ENCODE measurements at regions of chr9 and their contacts with region 1.

Region 1: DNA sequence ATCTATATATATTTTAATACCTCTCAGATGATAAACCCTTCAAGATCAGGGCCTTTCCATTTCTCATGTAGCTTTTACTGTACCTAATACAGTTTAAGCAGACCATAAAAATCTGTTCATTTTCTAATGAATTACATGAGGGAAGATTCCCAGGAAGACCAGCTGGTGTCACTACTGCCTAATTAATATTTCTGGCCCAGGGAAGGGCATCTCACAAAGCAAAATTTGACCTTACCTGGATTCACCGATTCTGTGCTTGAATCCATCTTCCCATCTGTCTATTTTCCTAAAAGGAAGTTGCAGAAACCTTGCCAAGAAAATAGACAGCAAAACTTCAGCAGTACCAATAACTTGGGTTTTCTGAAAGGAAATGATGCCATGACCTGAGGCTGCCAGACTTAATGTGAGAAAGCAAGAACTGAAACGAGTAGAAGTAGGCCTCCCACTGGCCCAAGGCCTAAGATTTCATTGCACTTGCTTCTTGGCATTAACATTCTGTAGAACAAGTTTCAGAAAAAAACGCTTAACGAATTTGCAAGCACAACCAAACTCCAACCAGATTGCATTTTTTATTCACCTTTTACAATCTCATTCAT is 83.0 kb upstream of the GLIS3 start:
- DNase-seq: peak; percentile 50
- ATAC-seq: peak; percentile 45
- H3K4me3 ChIP-seq: no peak overlapping the region
- H3K27ac ChIP-seq: no peak overlapping the region
- H3K4me1 ChIP-seq: no peaks in the 10 kb centered on the region
- H3K27me3 ChIP-seq: no peaks in the 10 kb centered on the region
- CTCF ChIP-seq: peak; percentile 74

Region 2: GRCh38 chr9:4397917-4398316 is 15.1 kb after region 1 on chr9:
- CTCF ChIA-PET with region 1: no interaction called
- POLR2A ChIA-PET with region 1: no interaction called
- intact Hi-C with region 1: no loop called
- DNase-seq: no peak
- ATAC-seq: no peak
- H3K4me3 ChIP-seq: no peak overlapping the region
- H3K27ac ChIP-seq: no peak overlapping the region
- H3K4me1 ChIP-seq: no peaks in the 10 kb centered on the region
- H3K27me3 ChIP-seq: no peaks in the 10 kb centered on the region
- CTCF ChIP-seq: no peak

Region 3: GRCh38 chr9:4489919-4490704 is 107.3 kb after region 1 on chr9 and contains the start of gene SLC1A1:
- CTCF ChIA-PET with region 1: interaction called, 3 read pairs
- POLR2A ChIA-PET with region 1: no interaction called
- intact Hi-C with region 1: loop called (anchors 10 kb)
- DNase-seq: peak; percentile 63
- ATAC-seq: peak; percentile 81
- H3K4me3 ChIP-seq: peak within 1 kb of the TSS; percentile 85
- H3K27ac ChIP-seq: 0 out of 2 replicates have a peak within 1 kb of the TSS, but pooled peaks have one; percentile 8
- H3K4me1 ChIP-seq: peaks cover 10% of the 10 kb centered on the region; the same call in 1 of the 2 replicates
- H3K27me3 ChIP-seq: no peaks in the 10 kb centered on the region
- CTCF ChIP-seq: no peak
- total RNA-seq, gene SLC1A1: 3.2 and 4.8 TPM in 2 replicates

Region 4: DNA sequence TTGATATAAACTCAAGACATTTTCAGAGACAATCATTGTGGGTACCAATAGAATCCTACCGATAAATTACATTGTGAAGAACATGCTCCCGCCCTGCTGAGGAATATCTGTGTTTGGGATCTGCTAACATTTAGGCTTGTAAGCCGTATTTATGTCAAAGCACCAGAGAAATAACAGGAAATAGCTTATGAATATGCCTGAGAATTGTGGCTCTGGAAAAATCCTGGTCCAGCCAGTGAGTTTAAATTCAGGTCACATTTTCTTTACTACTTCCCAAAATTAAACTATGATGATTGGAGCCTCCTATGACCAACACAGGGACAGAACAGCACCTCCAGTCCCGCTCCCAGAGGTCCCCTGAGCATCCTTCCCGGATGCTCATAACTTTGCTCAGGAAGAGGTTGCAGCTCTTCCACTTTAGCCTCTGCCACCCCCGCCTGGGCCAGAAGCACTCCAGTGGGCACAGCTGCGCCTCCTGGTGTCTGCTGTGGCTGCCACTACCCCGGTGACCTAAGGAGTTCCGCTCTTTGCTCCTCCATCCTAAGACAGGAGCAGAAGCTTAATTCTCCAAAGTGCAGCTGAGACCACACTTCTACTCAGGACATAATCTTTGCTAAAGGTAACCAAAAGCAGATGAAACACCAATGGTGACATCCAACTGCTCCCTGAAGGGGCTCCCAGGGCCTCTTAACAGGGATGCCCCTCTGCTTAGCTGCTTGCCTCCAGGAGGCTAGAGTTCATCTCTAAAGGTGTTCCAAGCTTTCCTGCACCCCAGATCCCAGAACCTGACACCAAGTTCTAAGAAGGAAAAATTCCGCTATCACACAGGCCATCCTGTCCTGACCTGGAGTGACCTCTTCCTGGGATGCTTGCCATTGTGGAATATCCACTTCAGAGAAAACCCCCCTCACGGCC is 166.2 kb after region 1 on chr9:
- CTCF ChIA-PET with region 1: interaction called, 4 read pairs
- POLR2A ChIA-PET with region 1: no interaction called
- intact Hi-C with region 1: loop called (anchors 2 kb)
- DNase-seq: peak; percentile 45
- ATAC-seq: peak; percentile 81
- H3K4me3 ChIP-seq: no peak overlapping the region
- H3K27ac ChIP-seq: no peak overlapping the region
- H3K4me1 ChIP-seq: no peaks in the 10 kb centered on the region
- H3K27me3 ChIP-seq: no peaks in the 10 kb centered on the region
- CTCF ChIP-seq: peak; percentile 65

Region 5: GRCh38 chr9:4640027-4640426 is 257.2 kb after region 1 on chr9:
- CTCF ChIA-PET with region 1: no interaction called
- POLR2A ChIA-PET with region 1: no interaction called
- intact Hi-C with region 1: loop called (anchors 1 kb)
- DNase-seq: peak; percentile 27
- ATAC-seq: 0 out of 2 replicates have a peak, but pooled peaks have one; percentile 27
- H3K4me3 ChIP-seq: no peak overlapping the region
- H3K27ac ChIP-seq: no peak overlapping the region
- H3K4me1 ChIP-seq: no peaks in the 10 kb centered on the region
- H3K27me3 ChIP-seq: no peaks in the 10 kb centered on the region
- CTCF ChIP-seq: peak; percentile 56

Region 6: GRCh38 chr9:4750023-4750673 is 367.3 kb after region 1 on chr9:
- CTCF ChIA-PET with region 1: no interaction called
- POLR2A ChIA-PET with region 1: no interaction called
- intact Hi-C with region 1: loop called (anchors 2 kb)
- DNase-seq: peak; percentile 75
- ATAC-seq: peak; percentile 37; the same call in 1 of the 2 replicates
- H3K4me3 ChIP-seq: no peak overlapping the region
- H3K27ac ChIP-seq: no peak overlapping the region
- H3K4me1 ChIP-seq: no peaks in the 10 kb centered on the region
- H3K27me3 ChIP-seq: no peaks in the 10 kb centered on the region
- CTCF ChIP-seq: peak; percentile 70